H1 (cell line): ENCODE measurements at regions of chr2 and their contacts with region 1.

Region 1: DNA sequence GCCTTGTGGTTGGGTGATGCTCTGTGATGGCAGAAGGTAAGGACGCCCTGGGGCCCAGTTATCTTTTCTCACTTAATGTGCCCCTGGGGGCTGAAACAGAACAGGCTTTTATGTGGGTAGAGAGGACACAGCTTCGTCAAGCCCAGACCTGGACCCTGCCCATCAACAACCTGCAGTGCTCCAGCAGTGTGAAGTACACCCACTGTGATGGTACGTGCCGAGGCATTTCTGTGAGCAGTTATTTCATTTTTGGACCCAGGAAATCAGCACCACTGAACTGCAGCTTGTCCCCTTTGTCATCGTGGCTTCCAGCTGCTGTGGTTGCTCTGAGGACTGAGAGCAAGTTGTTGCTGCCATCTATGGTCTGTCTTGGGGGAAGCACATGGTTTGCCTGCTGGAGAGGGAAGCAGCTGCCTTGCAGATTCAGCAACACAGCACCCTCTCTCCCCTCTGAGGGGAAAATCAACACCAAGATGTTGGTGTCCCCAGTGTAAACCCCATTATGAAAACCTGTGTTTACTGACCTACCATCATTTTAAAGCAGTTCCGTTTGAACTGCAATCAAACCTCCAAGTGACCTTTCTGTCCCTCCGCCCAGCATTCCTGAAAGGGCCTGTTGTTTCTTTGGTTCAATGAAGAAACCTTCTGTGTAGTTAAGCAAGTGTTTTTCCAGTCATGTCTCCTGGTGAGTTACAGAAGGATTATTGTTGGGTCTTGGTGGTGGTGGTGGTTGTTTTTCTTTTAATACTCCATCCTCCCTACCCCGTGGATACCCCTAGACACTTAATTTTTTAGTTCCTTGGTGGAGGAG is 158.2 kb downstream of the MGAT5 start:
- DNase-seq: peak; percentile 39 to 60
- H3K4me3 ChIP-seq: no peak overlapping the region
- H3K27ac ChIP-seq: no peak overlapping the region
- H3K4me1 ChIP-seq: peaks cover 0 to 5% (median 0%) of the 10 kb centered on the region in 4 experiments; a peak in 1 of 7 replicates
- H3K27me3 ChIP-seq: no peaks in the 10 kb centered on the region
- CTCF ChIP-seq: peak; percentile 71 to 92 (median 73)
- EP300 ChIP-seq: no peak
- POLR2A ChIP-seq: no peak
- RAD21 ChIP-seq: peak; percentile 89 to 91

Region 2: DNA sequence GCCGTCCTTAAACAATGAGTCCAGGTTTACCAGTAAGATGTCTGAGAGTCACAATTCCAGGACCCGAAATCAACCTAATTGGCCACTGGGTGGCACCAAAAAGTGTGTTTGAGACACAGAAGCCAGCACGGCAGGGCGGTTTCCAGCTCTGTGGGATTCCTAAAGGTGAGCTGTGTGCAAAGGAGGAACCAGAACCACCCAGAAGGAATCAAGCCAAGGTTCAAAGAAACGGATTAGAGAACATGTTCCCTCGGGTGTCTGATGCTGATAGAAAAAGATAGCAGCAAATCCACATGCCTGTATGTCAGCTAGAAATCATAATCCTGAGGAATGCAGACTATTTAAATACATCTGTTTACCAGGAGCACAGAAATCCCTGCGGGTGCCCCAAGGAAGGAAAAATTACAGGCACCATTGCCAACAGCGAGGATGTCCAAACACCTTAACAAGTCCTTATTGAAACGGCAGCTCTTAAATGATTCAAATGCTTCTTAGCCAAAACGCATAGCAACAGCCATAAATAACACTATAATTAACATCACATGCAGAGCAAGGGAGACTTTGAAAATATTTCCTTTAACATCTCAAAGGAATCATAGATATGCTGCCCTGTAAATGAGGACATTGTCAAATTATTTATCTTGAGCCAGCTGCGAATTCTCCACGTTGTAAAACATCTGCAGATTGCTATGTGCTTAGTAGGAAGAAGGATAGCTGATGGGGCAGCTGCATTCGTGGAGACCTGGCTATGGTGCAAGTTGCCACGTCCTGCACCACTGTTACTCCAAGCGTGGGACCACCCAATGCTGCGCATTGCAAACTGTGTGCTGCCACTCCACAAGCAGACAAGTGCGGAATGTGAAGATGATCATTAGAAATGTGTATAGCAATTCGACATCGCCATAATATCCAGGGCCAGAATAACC is 525.0 kb before region 1 on chr2:
- CTCF ChIA-PET with region 1: interaction called, 18 read pairs
- POLR2A ChIA-PET with region 1: no interaction called
- DNase-seq: peak; percentile 54 to 79
- H3K4me3 ChIP-seq: no peak overlapping the region
- H3K27ac ChIP-seq: no peak overlapping the region
- H3K4me1 ChIP-seq: peaks cover 0 to 3% (median 2%) of the 10 kb centered on the region in 4 experiments; a peak in 3 of 7 replicates
- H3K27me3 ChIP-seq: no peaks in the 10 kb centered on the region
- CTCF ChIP-seq: peak; percentile 53 to 80 (median 74)
- EP300 ChIP-seq: no peak
- POLR2A ChIP-seq: no peak
- RAD21 ChIP-seq: peak; percentile 87 to 94

Region 3: GRCh38 chr2:134245340-134245984 is 166.6 kb before region 1 on chr2:
- CTCF ChIA-PET with region 1: interaction called, 14 read pairs
- POLR2A ChIA-PET with region 1: no interaction called
- DNase-seq: peak in 1 of 2 experiments; percentile 87
- H3K4me3 ChIP-seq: no peak overlapping the region
- H3K27ac ChIP-seq: no peak overlapping the region
- H3K4me1 ChIP-seq: peaks cover 0 to 6% (median 0%) of the 10 kb centered on the region in 4 experiments; a peak in 1 of 7 replicates
- H3K27me3 ChIP-seq: no peaks in the 10 kb centered on the region
- CTCF ChIP-seq: peak; percentile 49 to 90 (median 59)
- EP300 ChIP-seq: no peak
- POLR2A ChIP-seq: no peak
- RAD21 ChIP-seq: peak; percentile 66 to 72

Region 4: DNA sequence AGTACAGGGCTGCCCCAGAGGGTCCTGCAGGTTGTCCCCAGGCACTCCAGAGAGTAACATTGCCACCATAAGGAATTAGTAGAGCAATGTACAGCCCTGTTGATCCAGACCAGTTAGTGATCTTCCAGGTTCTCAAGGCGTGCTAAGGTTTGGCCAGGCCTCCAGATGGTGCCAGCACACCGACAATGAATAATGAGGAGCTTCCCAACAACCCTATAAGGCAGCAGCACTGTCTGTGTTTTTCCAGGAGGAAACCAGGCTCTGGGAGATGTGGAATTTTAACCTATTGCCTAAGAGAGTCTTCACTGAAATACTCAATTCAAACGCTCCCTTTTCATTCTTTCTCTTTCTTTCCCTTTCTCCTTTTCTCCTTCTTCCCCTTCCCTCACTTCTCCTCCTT is 36.1 kb before region 1 on chr2:
- CTCF ChIA-PET with region 1: interaction called, 13 read pairs
- POLR2A ChIA-PET with region 1: no interaction called
- DNase-seq: no peak
- H3K4me3 ChIP-seq: no peak overlapping the region
- H3K27ac ChIP-seq: no peak overlapping the region
- H3K4me1 ChIP-seq: no peaks in the 10 kb centered on the region
- H3K27me3 ChIP-seq: no peaks in the 10 kb centered on the region
- CTCF ChIP-seq: peak in 2 of 3 experiments; percentile 23 to 36; a peak in 3 of 4 replicates
- EP300 ChIP-seq: no peak
- POLR2A ChIP-seq: no peak
- RAD21 ChIP-seq: peak; percentile 34 to 47

Region 5: GRCh38 chr2:134431838-134432434 is 19.9 kb after region 1 on chr2:
- CTCF ChIA-PET with region 1: interaction called, 20 read pairs
- POLR2A ChIA-PET with region 1: no interaction called
- DNase-seq: no peak
- H3K4me3 ChIP-seq: no peak overlapping the region
- H3K27ac ChIP-seq: no peak overlapping the region
- H3K4me1 ChIP-seq: peaks cover 0 to 8% (median 5%) of the 10 kb centered on the region in 4 experiments; a peak in 4 of 7 replicates
- H3K27me3 ChIP-seq: peaks cover 3 to 40% (median 22%) of the 10 kb centered on the region in 4 experiments; a peak in 6 of 7 replicates
- CTCF ChIP-seq: no peak
- EP300 ChIP-seq: no peak
- POLR2A ChIP-seq: no peak
- RAD21 ChIP-seq: no peak

Region 6: DNA sequence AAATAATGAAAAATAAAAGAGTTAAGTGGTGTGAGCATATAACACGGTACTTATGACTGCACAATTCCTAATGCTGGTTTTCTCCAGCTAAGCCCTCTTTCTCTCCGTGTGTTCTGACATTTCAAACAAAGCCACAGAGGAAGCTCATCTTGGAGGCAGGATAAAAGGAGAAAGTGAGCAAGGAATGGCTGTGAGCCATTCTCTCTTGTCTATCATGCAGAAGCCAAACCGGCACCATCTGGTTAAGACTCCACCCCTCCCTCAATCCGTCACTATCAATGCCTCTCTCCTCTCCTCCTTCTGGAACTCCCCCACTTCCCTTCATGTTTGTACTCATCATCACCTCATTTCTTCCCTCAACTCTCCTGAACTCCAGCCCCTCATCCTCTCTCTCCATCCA is 96.4 kb after region 1 on chr2:
- CTCF ChIA-PET with region 1: no interaction called
- POLR2A ChIA-PET with region 1: no interaction called
- DNase-seq: no peak
- H3K4me3 ChIP-seq: no peak overlapping the region
- H3K27ac ChIP-seq: no peak overlapping the region
- H3K4me1 ChIP-seq: no peaks in the 10 kb centered on the region; a peak in 1 of 7 replicates
- H3K27me3 ChIP-seq: no peaks in the 10 kb centered on the region; a peak in 1 of 7 replicates
- CTCF ChIP-seq: no peak
- EP300 ChIP-seq: no peak
- POLR2A ChIP-seq: no peak
- RAD21 ChIP-seq: no peak

Region 7: GRCh38 chr2:134693359-134694330 is 281.6 kb after region 1 on chr2:
- CTCF ChIA-PET with region 1: no interaction called
- POLR2A ChIA-PET with region 1: no interaction called
- DNase-seq: no peak
- H3K4me3 ChIP-seq: no peak overlapping the region
- H3K27ac ChIP-seq: no peak overlapping the region
- H3K4me1 ChIP-seq: no peaks in the 10 kb centered on the region
- H3K27me3 ChIP-seq: no peaks in the 10 kb centered on the region
- CTCF ChIP-seq: no peak
- EP300 ChIP-seq: no peak
- POLR2A ChIP-seq: no peak
- RAD21 ChIP-seq: no peak